B cell (primary cell): ENCODE measurements at regions of chr6 and their contacts with region 1.

Region 1: GRCh38 chr6:121430514-121431460 is 4.7 kb upstream of the GJA1 start:
- DNase-seq: no peak
- ATAC-seq: no peak
- H3K4me3 ChIP-seq: no peak overlapping the region
- H3K4me3 Mint-ChIP-seq: no peak overlapping the region
- H3K27ac ChIP-seq: no peak overlapping the region
- H3K27ac Mint-ChIP-seq: no peak overlapping the region
- H3K4me1 ChIP-seq: no peaks in the 10 kb centered on the region
- H3K4me1 Mint-ChIP-seq: no peaks in the 10 kb centered on the region
- H3K27me3 ChIP-seq: peaks cover 0 to 4% (median 3%) of the 10 kb centered on the region in 4 experiments
- H3K27me3 Mint-ChIP-seq: peaks cover 12% of the 10 kb centered on the region
- CTCF ChIP-seq: no peak

Region 2: DNA sequence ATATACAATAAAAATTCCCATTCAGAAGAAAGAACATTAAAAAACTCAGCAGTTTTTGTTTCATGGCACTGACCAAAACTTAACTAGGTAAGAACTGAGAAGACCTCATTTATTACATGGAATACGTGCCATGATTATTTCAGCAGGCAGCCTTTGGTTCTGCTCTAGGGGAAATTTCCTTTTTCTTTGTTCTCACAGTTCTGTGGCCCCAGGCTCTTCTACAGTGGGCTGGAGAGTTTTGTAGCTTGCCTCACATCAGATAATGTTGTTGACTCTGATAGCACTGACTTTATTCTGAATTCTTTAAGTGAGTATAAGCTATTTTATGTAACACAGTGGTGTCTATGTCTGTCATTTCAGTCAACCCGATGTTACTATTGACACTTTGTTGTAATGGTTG is 940.8 kb before region 1 on chr6:
- CTCF ChIA-PET with region 1: no interaction called
- POLR2A ChIA-PET with region 1: no interaction called
- intact Hi-C with region 1: loop called (anchors 5 kb)
- DNase-seq: no peak
- ATAC-seq: no peak
- H3K4me3 ChIP-seq: no peak overlapping the region
- H3K4me3 Mint-ChIP-seq: no peak overlapping the region
- H3K27ac ChIP-seq: no peak overlapping the region
- H3K27ac Mint-ChIP-seq: no peak overlapping the region
- H3K4me1 ChIP-seq: no peaks in the 10 kb centered on the region
- H3K4me1 Mint-ChIP-seq: no peaks in the 10 kb centered on the region
- H3K27me3 ChIP-seq: no peaks in the 10 kb centered on the region
- H3K27me3 Mint-ChIP-seq: no peaks in the 10 kb centered on the region
- CTCF ChIP-seq: no peak

Region 3: GRCh38 chr6:121748376-121748775 is 317.6 kb after region 1 on chr6:
- CTCF ChIA-PET with region 1: no interaction called
- POLR2A ChIA-PET with region 1: no interaction called
- intact Hi-C with region 1: no loop called
- DNase-seq: no peak
- ATAC-seq: no peak
- H3K4me3 ChIP-seq: no peak overlapping the region
- H3K4me3 Mint-ChIP-seq: no peak overlapping the region
- H3K27ac ChIP-seq: no peak overlapping the region
- H3K27ac Mint-ChIP-seq: no peak overlapping the region
- H3K4me1 ChIP-seq: no peaks in the 10 kb centered on the region
- H3K4me1 Mint-ChIP-seq: no peaks in the 10 kb centered on the region
- H3K27me3 ChIP-seq: no peaks in the 10 kb centered on the region
- H3K27me3 Mint-ChIP-seq: no peaks in the 10 kb centered on the region
- CTCF ChIP-seq: no peak